ENCODE measurements at regions of chr1 and their contacts with region 1.

Region 1: GRCh38 chr1:244835276-244836134 is at the start of gene COX20:
- DNase-seq: peak; percentile 88
- H3K4me3 Mint-ChIP-seq: peak within 1 kb of the TSS; percentile 83
- H3K27ac Mint-ChIP-seq: peak within 1 kb of the TSS; percentile 99
- H3K4me1 Mint-ChIP-seq: peaks cover 50% of the 10 kb centered on the region
- H3K27me3 Mint-ChIP-seq: no peaks in the 10 kb centered on the region
- total RNA-seq, gene COX20: 22.2 to 22.9 TPM

Region 2: DNA sequence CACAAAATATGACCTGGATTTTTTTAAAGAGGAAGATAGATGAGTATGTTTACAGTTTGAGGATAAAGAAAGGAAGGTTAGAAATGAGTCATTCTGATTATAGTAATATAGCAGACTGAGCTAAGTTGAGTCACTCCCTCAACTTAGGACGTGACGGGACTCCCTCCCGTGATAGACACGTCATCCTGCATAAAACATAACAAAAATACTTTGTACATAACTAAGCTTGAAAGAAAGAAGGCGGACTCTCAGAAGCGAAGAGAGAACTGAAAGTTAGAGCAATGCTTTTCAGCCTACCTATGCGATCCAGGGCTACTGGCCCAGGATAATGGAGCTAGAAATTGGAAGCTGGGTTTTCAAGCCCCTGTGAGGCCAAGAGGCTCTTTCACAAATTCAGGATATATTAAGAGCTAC is 235.6 kb before region 1 on chr1:
- CTCF ChIA-PET with region 1: interaction called, 6 read pairs
- POLR2A ChIA-PET with region 1: interaction called, 14 read pairs
- DNase-seq: peak; percentile 65
- H3K4me3 Mint-ChIP-seq: peak overlapping the region; percentile 62
- H3K27ac Mint-ChIP-seq: peak overlapping the region; percentile 79
- H3K4me1 Mint-ChIP-seq: peaks cover 19% of the 10 kb centered on the region
- H3K27me3 Mint-ChIP-seq: peaks cover 15% of the 10 kb centered on the region

Region 3: DNA sequence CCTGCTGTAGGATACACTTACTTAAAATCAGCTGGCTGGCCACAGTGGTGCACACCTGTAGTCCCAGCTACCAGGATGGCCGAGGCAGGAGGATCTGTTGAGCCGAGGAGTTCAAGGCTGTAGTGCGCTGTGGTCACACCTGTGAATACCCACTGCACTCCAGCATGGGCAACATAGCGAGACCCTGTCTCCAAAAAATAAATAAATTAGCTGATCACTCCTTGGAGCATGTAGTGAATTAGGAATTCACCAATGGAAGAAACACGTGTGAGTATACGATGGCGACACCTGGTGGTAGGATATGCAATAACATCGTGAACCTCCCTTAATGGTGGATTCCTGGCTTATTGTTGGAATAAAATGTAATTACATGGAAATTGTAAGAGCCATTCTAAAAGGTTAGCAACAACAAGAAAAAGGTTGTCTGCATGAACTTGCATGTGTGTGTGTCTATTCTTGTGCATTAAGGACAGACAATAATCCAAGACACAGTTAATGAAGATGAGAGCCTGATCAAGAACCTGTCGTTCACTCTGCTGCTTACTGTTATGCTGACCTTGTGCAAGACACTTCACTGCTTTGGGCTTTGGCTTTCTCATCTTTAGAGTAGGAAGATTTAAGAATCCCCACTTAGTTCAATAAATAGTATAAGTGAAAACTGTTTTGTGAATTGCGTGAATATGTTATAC is 38.6 kb before region 1 on chr1:
- CTCF ChIA-PET with region 1: interaction called, 11 read pairs
- POLR2A ChIA-PET with region 1: interaction called, 9 read pairs
- DNase-seq: peak; percentile 47
- H3K4me3 Mint-ChIP-seq: no peak overlapping the region
- H3K27ac Mint-ChIP-seq: no peak overlapping the region
- H3K4me1 Mint-ChIP-seq: peaks cover 5% of the 10 kb centered on the region
- H3K27me3 Mint-ChIP-seq: peaks cover 2% of the 10 kb centered on the region

Region 4: DNA sequence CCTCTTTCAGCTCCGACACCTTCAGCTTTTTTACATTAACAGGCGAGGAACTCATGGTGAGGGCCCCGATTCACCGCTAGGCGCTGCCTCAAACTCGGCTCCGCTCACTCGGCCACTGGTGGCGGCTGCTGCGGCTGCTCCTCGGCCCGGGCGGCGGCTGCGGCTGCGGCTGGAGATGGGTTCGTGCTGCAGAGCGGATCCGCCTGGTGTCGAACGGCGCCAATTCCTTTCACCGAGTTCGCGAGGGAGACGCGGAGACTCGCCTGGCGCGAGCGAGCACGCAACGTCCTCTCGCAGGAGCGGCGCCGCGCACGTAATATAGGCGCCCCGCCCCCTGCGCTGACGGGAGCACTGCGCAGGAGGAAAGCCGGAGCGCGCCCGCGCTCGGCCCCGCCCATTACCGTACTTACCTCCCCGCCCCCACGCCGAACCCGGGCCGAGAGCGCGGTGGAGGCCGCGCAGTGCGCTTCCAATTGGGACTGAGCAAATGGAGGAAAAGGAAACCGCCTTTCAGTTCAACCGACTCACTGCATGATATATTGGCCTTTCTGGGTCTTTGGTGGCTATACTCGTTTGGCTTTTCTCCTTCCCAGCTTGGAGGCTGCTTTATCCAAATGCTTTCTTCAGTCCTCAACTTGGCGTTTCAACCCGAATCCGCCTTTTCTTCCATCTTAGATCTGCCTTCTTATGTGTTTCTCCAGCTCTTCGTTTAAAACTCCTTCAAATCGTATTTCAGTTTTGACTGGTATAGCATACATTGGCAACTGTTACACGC is 28.9 kb after region 1 on chr1 and contains the start of gene HNRNPU:
- CTCF ChIA-PET with region 1: interaction called, 92 read pairs
- POLR2A ChIA-PET with region 1: interaction called, 925 read pairs
- DNase-seq: peak; percentile 96
- H3K4me3 Mint-ChIP-seq: peak within 1 kb of the TSS; percentile 81
- H3K27ac Mint-ChIP-seq: peak within 1 kb of the TSS; percentile 94
- H3K4me1 Mint-ChIP-seq: peaks cover 42% of the 10 kb centered on the region
- H3K27me3 Mint-ChIP-seq: no peaks in the 10 kb centered on the region
- total RNA-seq, gene HNRNPU: 364 to 371 TPM